ENCODE measurements at regions of chr1 and their contacts with region 1.

Region 1: DNA sequence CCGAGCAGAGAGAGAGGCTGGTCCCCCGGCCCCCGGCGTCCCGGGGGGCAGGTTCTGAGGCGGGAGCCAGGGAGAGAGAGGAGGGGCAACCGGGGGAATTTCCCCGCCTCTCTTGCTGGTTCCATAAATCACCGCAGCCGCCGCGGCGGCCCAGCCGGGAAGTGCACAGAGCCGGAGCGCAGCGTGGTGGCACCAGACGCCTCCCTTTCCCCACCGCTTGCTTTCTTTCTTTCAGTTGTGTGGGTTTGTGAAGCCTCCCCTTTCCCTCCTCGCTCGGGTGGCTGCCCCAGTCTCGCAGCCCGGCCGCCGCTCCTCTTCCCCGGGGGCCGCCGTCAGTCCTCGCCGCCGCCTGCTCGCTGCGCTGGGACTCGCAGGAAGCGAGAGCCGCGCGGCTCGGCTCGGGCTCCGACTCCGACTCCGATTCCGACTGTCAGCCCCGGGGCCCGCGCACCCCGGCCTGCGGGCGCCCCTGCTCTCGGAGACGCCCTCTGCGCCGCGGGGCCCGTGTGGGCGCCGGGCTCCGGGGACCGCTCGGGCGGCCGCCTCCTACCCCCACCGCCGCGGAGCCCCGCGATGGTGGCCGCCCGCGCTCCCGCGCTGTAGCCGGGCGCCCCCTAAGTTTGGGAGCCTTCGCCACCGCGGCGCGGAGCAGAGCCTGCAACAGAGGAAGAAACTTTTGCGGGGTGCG is at the start of gene CACHD1:
- DNase-seq: peak; percentile 79 to 85 (median 80)
- ATAC-seq: peak; percentile 59 to 90 (median 87)
- H3K4me3 ChIP-seq: peak within 1 kb of the TSS; percentile 64 to 90 (median 74)
- H3K27ac ChIP-seq: peak within 1 kb of the TSS; percentile 58 to 87 (median 81)
- H3K4me1 ChIP-seq: peaks cover 1 to 30% (median 10%) of the 10 kb centered on the region in 12 donors
- H3K27me3 ChIP-seq: peaks cover 0 to 41% (median 0%) of the 10 kb centered on the region in 9 donors
- CTCF ChIP-seq: peak in 10 of 12 donors; percentile 26 to 71 (median 48)
- POLR2A ChIP-seq: peak in 1 of 2 donors; percentile 62
- total RNA-seq, gene CACHD1: 1.3 to 10.0 (median 2.6) TPM

Region 2: GRCh38 chr1:64268653-64269557 is 201.2 kb before region 1 on chr1:
- intact Hi-C with region 1: loop called in 1 of 10 experiments (anchors 10 kb)
- DNase-seq: peak in 4 of 5 donors; percentile 64 to 73 (median 70)
- ATAC-seq: peak in 3 of 4 donors; percentile 69 to 79 (median 74)
- H3K4me3 ChIP-seq: no peak overlapping the region
- H3K27ac ChIP-seq: no peak overlapping the region
- H3K4me1 ChIP-seq: peaks cover 0 to 6% (median 0%) of the 10 kb centered on the region in 12 donors
- H3K27me3 ChIP-seq: no peaks in the 10 kb centered on the region
- CTCF ChIP-seq: peak; percentile 69 to 89 (median 81)
- POLR2A ChIP-seq: no peak

Region 3: DNA sequence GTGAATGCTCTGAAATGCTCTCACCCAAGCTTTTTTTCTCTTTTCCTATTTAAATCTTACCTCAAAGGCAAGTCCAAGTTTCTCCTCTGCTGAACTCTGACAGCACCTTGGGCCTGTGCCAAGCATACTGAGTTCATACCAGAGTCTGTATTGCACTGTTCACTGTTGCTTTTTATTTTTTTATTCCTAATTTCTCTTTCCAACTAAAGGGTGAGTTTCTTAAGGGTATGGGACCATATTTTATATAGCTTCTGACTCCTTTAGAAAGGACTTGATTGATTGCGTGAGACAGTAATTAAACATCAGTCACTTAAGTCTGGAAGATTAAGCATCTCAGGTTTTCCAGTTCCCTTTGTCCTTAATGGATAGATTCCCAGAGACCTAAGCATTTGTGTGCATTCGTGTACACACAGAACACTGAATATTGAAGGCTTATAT is 69.7 kb after region 1 on chr1:
- intact Hi-C with region 1: loop called in 5 of 10 experiments (anchors 2 to 10 kb)
- DNase-seq: peak; percentile 68 to 89 (median 76)
- ATAC-seq: peak in 3 of 4 donors; percentile 38 to 59 (median 59)
- H3K4me3 ChIP-seq: peak overlapping the region in 9 of 12 donors; percentile 21 to 50 (median 39)
- H3K27ac ChIP-seq: peak overlapping the region in 11 of 12 donors; percentile 47 to 73 (median 61)
- H3K4me1 ChIP-seq: peaks cover 0 to 60% (median 30%) of the 10 kb centered on the region in 12 donors
- H3K27me3 ChIP-seq: no peaks in the 10 kb centered on the region
- CTCF ChIP-seq: no peak
- POLR2A ChIP-seq: no peak

Region 4: DNA sequence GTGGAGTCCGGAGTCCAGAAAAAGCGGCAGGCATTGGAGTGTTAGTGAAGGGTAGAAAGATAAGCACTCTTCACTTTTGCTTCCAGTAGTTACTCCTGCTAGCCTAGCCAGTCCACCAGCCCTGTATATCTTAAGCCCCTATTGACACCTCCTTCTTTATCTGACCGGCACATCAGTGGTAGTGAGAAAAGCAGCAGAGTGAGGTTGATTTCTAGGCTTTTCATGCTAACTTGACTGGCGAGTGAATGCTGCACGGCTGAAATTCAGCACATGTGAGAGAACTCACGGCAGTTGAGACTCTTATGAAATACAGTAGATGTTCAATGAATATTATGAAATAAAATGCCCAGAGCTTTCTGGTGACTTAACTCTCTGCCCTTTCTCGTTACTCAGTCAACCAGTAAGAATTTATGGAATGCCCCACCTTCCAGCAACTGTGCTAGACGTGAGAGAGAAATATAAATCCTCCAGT is 128.0 kb after region 1 on chr1:
- intact Hi-C with region 1: loop called in 1 of 10 experiments (anchors 10 kb)
- DNase-seq: no peak
- ATAC-seq: peak in 1 of 4 donors; percentile 38
- H3K4me3 ChIP-seq: no peak overlapping the region
- H3K27ac ChIP-seq: no peak overlapping the region
- H3K4me1 ChIP-seq: peaks cover 0 to 17% (median 2%) of the 10 kb centered on the region in 12 donors
- H3K27me3 ChIP-seq: no peaks in the 10 kb centered on the region
- CTCF ChIP-seq: no peak
- POLR2A ChIP-seq: no peak

Region 5: GRCh38 chr1:64654519-64655341 is 184.6 kb after region 1 on chr1:
- intact Hi-C with region 1: loop called in 2 of 10 experiments (anchors 5 to 10 kb)
- DNase-seq: peak in 1 of 5 donors; percentile 30
- ATAC-seq: peak in 3 of 4 donors; percentile 30 to 63 (median 44)
- H3K4me3 ChIP-seq: no peak overlapping the region
- H3K27ac ChIP-seq: no peak overlapping the region
- H3K4me1 ChIP-seq: peaks cover 0 to 8% (median 0%) of the 10 kb centered on the region in 12 donors
- H3K27me3 ChIP-seq: no peaks in the 10 kb centered on the region
- CTCF ChIP-seq: peak in 6 of 12 donors; percentile 13 to 37 (median 23)
- POLR2A ChIP-seq: no peak

Region 6: DNA sequence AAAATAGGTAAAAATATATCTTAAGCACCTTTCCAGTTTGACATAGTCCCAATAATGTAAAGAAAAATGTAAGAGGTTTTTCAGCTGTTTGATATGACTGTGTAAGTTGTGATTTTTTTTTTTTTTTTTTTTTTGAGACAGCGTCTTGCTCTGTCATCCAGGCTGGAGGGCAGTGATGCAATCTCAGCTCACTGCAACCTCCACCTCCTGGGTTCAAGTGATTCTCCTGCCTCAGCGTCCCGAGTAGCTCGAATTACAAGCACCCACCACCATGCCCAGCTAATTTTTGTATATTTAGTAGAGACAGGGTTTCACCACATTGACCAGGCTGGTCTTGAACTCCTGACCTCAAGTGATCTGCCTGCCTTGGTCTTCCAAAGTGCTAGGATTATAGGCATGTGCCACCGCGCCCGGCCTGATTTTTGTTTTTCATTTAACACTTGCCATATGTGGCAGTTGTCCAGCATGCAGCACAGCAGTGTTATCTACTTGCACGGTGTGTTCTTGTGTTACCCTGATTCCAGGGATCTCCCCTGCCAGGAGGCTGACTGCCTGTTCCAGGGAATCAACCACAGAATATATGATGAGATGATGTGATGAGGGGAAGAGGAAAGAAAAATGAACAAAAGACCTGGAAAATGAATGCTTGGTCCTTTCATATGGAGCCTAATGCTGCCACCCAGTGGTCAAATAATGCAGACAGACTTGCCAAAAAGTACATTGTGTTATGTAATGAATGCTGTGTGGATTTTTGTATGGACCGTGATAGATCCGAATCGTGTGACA is 353.8 kb after region 1 on chr1:
- intact Hi-C with region 1: loop called in 2 of 10 experiments (anchors 10 kb)
- DNase-seq: peak in 4 of 5 donors; percentile 34 to 61 (median 52)
- ATAC-seq: peak; percentile 53 to 71 (median 67)
- H3K4me3 ChIP-seq: peak overlapping the region in 4 of 12 donors; percentile 20 to 37 (median 29)
- H3K27ac ChIP-seq: no peak overlapping the region
- H3K4me1 ChIP-seq: peaks cover 0 to 28% (median 1%) of the 10 kb centered on the region in 12 donors
- H3K27me3 ChIP-seq: no peaks in the 10 kb centered on the region
- CTCF ChIP-seq: peak; percentile 74 to 91 (median 84)
- POLR2A ChIP-seq: no peak

Measured in heart left ventricle (tissue), 16 donors.